ENCODE measurements at regions of chr6 and their contacts with region 1.

Region 1: DNA sequence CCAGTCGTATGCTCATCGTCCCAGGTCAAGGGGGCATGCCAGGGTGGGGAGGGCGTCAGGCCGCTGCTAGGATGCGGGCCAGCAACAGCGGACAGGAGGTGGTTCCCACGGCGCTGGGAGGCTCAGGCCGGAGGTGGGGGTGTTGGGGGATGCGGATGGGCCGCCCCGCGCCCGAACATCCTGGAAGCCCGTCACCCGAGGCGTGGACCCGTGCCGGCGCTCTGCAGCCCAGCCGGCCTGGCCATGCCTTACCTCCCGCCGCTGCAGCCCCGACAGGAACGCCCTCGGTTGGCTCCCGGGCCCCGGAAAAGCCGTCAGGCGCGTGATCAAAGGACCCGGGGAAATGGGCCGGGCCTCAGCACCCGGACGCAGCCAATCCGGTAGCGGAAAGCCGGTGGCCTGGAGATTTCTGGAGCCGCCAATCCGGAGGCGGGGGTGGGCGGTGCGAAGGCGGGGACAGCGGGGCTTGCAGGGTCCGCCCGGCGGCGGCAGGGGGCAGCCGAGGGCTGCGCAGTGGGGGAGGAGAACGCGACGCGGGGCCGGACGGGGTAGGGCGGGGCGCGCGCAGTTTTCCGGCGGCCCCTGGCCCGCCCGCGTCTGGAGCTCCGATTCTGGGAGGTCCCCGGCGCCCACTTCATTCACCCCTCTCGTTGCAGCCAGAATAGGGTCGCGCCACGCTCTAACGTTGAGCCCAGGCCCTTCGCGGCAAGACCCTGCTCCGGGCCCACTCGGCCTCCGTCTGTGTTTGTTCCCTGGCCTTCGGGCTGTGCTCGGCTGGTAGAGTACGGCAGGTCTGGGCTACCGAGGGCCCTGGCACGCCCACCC is at the start of gene SMIM29:
- DNase-seq: peak; percentile 85 to 98
- H3K4me3 ChIP-seq: peak within 1 kb of the TSS; percentile 73 to 89
- H3K27ac ChIP-seq: peak within 1 kb of the TSS; percentile 86 to 88
- H3K4me1 ChIP-seq: peaks cover 5 to 16% of the 10 kb centered on the region in 2 donors
- H3K27me3 ChIP-seq: no peaks in the 10 kb centered on the region
- CTCF ChIP-seq: peak; percentile 96 to 98 (median 97)
- total RNA-seq, gene SMIM29: 9.2 TPM

Region 2: DNA sequence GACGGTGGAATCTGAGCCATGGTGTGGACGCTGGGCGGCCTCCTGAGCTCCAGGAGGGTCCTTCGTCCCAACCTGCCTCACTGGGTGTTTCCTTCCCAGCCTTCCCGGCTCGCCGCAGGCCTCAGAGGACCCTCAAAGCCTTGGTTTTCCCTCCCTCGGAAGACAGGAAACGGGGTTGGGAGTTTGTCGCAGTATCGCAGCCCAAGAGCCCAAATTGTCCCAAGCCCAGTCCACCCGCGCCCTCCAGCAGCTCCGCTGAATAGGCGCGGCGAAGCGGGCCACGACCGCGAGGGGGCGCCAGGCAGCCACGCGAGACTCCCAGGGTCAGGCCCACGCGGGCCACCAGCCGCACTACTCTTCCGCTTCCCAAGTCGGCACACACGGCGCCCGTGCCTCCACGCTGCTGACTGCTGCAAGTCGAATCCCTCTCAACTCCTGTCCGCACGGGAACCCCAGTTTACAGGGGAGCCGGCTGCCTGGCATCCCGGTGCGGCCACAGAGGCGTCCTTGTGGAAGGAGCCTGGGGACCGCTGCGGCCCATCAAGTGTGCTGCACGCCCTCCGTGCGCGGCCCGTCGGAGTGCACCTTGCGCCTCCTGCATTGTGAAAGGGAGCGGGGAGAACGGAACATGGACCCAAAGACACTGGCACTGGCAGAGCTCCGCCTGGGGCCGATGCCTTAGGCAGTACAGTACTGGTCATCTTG is 52.7 kb before region 1 on chr6:
- intact Hi-C with region 1: loop called (anchors 1 kb)
- DNase-seq: peak; percentile 53 to 92
- H3K4me3 ChIP-seq: peak overlapping the region; percentile 57 to 71
- H3K27ac ChIP-seq: no peak overlapping the region
- H3K4me1 ChIP-seq: peaks cover 0 to 6% of the 10 kb centered on the region in 2 donors
- H3K27me3 ChIP-seq: no peaks in the 10 kb centered on the region
- CTCF ChIP-seq: peak; percentile 98

Region 3: GRCh38 chr6:34301408-34301807 is 52.5 kb after region 1 on chr6:
- intact Hi-C with region 1: loop called (anchors 2 kb)
- DNase-seq: peak in 1 of 2 donors; percentile 83
- H3K4me3 ChIP-seq: no peak overlapping the region
- H3K27ac ChIP-seq: peak overlapping the region; percentile 32 to 60
- H3K4me1 ChIP-seq: peaks cover 17 to 39% of the 10 kb centered on the region in 2 donors
- H3K27me3 ChIP-seq: no peaks in the 10 kb centered on the region
- CTCF ChIP-seq: no peak

Region 4: GRCh38 chr6:34414999-34415858 is 166.3 kb after region 1 on chr6:
- intact Hi-C with region 1: loop called (anchors 1 kb)
- DNase-seq: peak in 1 of 2 donors; percentile 87
- H3K4me3 ChIP-seq: peak overlapping the region in 1 of 2 donors; percentile 39
- H3K27ac ChIP-seq: peak overlapping the region; percentile 76 to 81
- H3K4me1 ChIP-seq: peaks cover 4 to 8% of the 10 kb centered on the region in 2 donors
- H3K27me3 ChIP-seq: no peaks in the 10 kb centered on the region
- CTCF ChIP-seq: peak; percentile 63 to 82 (median 76)

Region 5: GRCh38 chr6:34436803-34437643 is 188.1 kb after region 1 on chr6:
- intact Hi-C with region 1: no loop called
- DNase-seq: no peak
- H3K4me3 ChIP-seq: no peak overlapping the region
- H3K27ac ChIP-seq: no peak overlapping the region
- H3K4me1 ChIP-seq: no peaks in the 10 kb centered on the region
- H3K27me3 ChIP-seq: no peaks in the 10 kb centered on the region
- CTCF ChIP-seq: no peak

Region 6: GRCh38 chr6:34610819-34611477 is 362.0 kb after region 1 on chr6:
- intact Hi-C with region 1: loop called (anchors 1 kb)
- DNase-seq: no peak
- H3K4me3 ChIP-seq: no peak overlapping the region
- H3K27ac ChIP-seq: peak overlapping the region; percentile 4 to 54
- H3K4me1 ChIP-seq: peaks cover 0 to 4% of the 10 kb centered on the region in 2 donors
- H3K27me3 ChIP-seq: no peaks in the 10 kb centered on the region
- CTCF ChIP-seq: no peak

Region 7: DNA sequence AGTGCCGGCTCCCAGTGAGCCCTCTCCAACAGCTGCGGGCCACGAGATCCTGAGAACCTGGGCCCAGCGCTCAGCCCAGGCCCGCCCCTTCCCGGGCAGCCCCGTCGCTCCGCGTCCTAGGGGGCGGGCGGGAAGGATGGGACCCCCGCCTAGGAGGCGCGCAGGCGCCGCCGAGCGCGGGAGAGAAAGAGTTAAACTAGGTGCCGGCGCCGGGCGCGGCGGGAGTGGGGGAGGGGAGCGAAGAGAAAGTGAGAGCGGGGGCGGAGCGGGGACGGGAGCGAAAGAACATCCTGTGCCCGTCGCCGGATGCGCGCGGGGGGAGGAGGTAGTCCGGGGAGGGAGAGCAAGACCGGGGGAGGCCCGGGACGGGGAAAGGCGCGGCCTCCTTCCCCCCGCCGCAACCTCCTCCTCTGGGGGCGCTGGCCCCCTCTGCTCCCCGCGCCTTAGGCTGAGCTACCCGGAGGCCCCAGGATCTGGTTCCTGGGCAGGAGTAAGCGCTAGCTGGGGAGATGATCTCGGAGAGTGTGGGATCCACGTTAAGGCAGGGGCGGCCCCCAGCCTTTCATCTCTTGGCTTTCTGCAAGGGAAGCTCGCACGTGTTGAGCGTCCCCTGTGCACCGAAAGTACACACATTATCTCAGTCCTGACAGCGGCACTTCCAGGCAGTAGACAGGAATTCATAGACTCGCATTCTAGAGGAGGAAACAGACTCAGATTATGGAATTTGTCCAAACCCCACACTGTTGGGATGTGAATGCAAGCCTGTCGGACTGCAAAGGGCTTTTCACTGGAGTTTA is 1483.0 kb after region 1 on chr6:
- intact Hi-C with region 1: loop called (anchors 10 kb)
- DNase-seq: peak; percentile 86 to 98
- H3K4me3 ChIP-seq: peak overlapping the region; percentile 59 to 84
- H3K27ac ChIP-seq: peak overlapping the region; percentile 100
- H3K4me1 ChIP-seq: peaks cover 47 to 67% of the 10 kb centered on the region in 2 donors
- H3K27me3 ChIP-seq: no peaks in the 10 kb centered on the region
- CTCF ChIP-seq: no peak

Measured in ascending aorta (tissue), 2 donors.